ENCODE measurements at regions of chr7 and their contacts with region 1.

Region 1: GRCh38 chr7:33895025-33895804 is 10.1 kb upstream of the BMPER start:
- DNase-seq: peak; percentile 77
- H3K4me3 Mint-ChIP-seq: no peak overlapping the region
- H3K27ac Mint-ChIP-seq: no peak overlapping the region
- H3K4me1 Mint-ChIP-seq: peaks cover 14% of the 10 kb centered on the region
- H3K27me3 Mint-ChIP-seq: peaks cover 11% of the 10 kb centered on the region
- CTCF ChIP-seq: peak; percentile 79

Region 2: GRCh38 chr7:33243319-33243881 is 651.8 kb before region 1 on chr7:
- CTCF ChIA-PET with region 1: interaction called, 10 read pairs
- POLR2A ChIA-PET with region 1: no interaction called
- intact Hi-C with region 1: loop called (anchors 10 kb)
- DNase-seq: peak; percentile 57
- H3K4me3 Mint-ChIP-seq: no peak overlapping the region
- H3K27ac Mint-ChIP-seq: no peak overlapping the region
- H3K4me1 Mint-ChIP-seq: no peaks in the 10 kb centered on the region
- H3K27me3 Mint-ChIP-seq: no peaks in the 10 kb centered on the region
- CTCF ChIP-seq: peak; percentile 58

Region 3: DNA sequence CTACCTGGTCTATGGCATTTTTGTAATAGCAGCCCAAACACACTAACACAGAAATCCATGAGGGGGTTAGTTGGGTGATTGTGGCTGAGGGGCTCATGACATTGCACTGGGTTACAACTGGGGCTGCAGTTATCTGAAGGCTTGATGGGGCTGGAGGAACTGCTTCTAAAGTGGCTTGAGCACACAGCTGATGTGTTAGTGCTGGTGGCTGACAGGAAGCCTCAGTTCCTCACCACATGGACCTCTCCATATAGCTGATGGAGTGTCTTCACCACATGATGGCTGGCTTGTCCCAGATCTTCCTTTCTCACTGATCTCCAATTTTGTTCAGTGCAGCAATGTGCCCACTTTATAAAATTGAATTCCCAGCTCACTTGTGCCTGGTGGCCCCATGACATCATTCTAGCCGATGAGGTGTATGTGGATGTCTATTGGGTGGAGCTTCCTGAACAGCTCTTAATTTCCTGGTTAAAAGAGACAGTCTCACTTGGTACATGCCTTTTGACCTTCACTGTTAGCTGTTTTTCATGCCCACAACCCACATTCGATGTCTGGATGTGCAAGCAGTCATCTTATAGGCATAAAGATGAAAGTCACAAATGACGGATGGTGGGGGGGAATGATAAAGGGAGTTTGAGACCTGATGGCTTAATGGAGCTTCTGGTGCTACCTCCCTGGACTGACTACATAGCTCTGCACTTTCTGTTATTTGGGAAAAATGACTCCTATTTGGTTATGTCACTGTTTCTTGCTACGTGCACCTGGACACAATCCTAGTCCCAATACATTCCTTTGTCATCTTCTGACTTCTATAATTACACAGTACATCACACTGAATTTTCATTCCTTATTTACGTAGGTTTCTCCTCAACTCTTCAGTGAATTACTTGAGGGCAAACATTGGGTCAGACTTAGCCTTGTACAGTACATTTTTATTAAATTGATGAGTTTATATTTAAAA is 156.7 kb before region 1 on chr7:
- CTCF ChIA-PET with region 1: interaction called, 12 read pairs
- POLR2A ChIA-PET with region 1: no interaction called
- intact Hi-C with region 1: no loop called
- DNase-seq: no peak
- H3K4me3 Mint-ChIP-seq: no peak overlapping the region
- H3K27ac Mint-ChIP-seq: no peak overlapping the region
- H3K4me1 Mint-ChIP-seq: peaks cover 16% of the 10 kb centered on the region
- H3K27me3 Mint-ChIP-seq: no peaks in the 10 kb centered on the region
- CTCF ChIP-seq: no peak

Region 4: DNA sequence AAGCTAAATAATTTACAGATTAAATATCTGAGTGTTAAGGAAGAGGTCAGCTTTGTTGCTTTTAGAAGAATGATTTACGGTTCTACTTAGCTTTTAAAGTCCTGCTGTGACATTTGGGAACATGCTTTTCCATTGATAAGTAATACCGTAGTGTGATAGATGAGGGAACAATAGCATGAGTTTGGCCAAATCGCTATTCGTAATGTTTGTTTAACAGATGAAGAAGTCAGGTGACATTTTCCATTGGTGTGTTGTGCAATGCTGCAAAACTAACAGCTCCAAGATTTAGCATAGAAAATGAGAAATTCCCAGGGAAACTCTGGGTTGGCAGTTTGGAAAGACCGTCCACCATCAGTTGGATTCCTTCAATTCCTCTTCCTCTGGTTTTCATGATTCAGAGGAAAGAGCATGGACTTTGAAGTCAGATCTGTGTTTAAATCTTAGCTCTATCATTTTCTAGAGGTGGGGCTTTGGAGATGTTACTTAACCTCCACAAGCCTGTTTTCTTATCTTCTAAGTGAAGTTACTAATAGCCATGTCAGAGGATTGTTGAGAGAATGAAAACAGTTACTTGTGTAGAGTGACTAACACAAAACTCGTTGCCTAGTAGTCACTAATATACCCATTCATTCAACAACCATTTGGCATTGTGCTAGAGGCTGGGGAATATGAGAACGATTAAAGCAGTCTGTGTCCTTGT is 130.3 kb before region 1 on chr7:
- CTCF ChIA-PET with region 1: interaction called, 90 read pairs
- POLR2A ChIA-PET with region 1: no interaction called
- intact Hi-C with region 1: no loop called
- DNase-seq: no peak
- H3K4me3 Mint-ChIP-seq: no peak overlapping the region
- H3K27ac Mint-ChIP-seq: no peak overlapping the region
- H3K4me1 Mint-ChIP-seq: peaks cover 6% of the 10 kb centered on the region
- H3K27me3 Mint-ChIP-seq: no peaks in the 10 kb centered on the region
- CTCF ChIP-seq: no peak

Region 5: GRCh38 chr7:33876596-33877274 is 18.5 kb before region 1 on chr7:
- CTCF ChIA-PET with region 1: interaction called, 75 read pairs
- POLR2A ChIA-PET with region 1: no interaction called
- intact Hi-C with region 1: no loop called
- DNase-seq: no peak
- H3K4me3 Mint-ChIP-seq: no peak overlapping the region
- H3K27ac Mint-ChIP-seq: no peak overlapping the region
- H3K4me1 Mint-ChIP-seq: peaks cover 9% of the 10 kb centered on the region
- H3K27me3 Mint-ChIP-seq: no peaks in the 10 kb centered on the region
- CTCF ChIP-seq: no peak

Region 6: GRCh38 chr7:33952824-33953223 is 57.6 kb after region 1 on chr7:
- CTCF ChIA-PET with region 1: no interaction called
- POLR2A ChIA-PET with region 1: no interaction called
- intact Hi-C with region 1: no loop called
- DNase-seq: no peak
- H3K4me3 Mint-ChIP-seq: no peak overlapping the region
- H3K27ac Mint-ChIP-seq: no peak overlapping the region
- H3K4me1 Mint-ChIP-seq: no peaks in the 10 kb centered on the region
- H3K27me3 Mint-ChIP-seq: no peaks in the 10 kb centered on the region
- CTCF ChIP-seq: no peak

Region 7: GRCh38 chr7:33998476-33998875 is 103.3 kb after region 1 on chr7:
- CTCF ChIA-PET with region 1: no interaction called
- POLR2A ChIA-PET with region 1: no interaction called
- intact Hi-C with region 1: no loop called
- DNase-seq: no peak
- H3K4me3 Mint-ChIP-seq: no peak overlapping the region
- H3K27ac Mint-ChIP-seq: no peak overlapping the region
- H3K4me1 Mint-ChIP-seq: no peaks in the 10 kb centered on the region
- H3K27me3 Mint-ChIP-seq: no peaks in the 10 kb centered on the region
- CTCF ChIP-seq: no peak

Region 8: DNA sequence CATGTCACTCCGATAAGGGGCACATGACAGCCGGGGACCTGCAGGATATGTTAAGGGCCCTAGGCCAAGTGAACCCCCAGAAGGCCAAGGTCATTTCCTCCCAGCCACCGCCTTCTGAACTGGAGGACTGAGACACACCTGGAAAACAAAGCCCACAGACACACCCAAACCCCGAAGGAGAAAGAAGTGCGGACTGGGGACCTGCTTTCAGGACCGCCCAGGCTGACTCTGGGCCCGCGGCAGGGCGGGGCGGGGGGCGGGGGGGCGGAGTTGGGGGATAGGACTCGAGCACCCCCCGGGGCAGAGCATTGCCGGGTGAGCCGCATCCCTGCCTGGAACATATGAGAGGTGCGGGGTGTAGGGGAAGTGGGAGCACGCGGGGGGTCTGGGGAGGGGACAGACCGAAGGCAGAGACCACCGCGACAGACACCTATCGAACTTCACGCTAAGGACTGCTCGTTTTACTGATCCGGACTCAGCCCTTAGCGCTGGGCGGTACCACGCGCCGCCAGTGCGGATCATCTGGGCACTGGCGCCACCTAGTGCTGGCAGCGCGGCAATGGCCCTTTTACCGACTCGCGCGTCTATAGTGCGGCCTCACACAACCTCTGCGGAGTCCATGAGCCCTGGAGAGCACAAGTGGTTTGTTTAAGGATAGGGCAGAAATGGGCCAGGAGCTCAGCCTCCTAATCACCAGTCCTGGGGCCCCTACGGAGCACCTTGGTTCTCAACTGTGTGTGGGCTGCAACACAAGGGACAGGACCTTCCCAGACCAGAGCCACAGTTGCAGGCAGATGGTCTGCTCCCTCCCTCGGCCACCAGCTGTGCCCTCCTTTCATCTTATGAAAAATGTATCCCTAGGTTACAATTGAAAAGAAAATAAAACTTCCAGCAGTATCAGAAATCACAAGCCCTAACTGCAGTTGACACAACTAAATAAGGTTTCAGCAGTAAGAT is 1642.1 kb after region 1 on chr7:
- CTCF ChIA-PET with region 1: no interaction called
- POLR2A ChIA-PET with region 1: no interaction called
- intact Hi-C with region 1: no loop called
- DNase-seq: peak; percentile 71
- H3K4me3 Mint-ChIP-seq: peak overlapping the region; percentile 60
- H3K27ac Mint-ChIP-seq: no peak overlapping the region
- H3K4me1 Mint-ChIP-seq: no peaks in the 10 kb centered on the region
- H3K27me3 Mint-ChIP-seq: peaks cover 34% of the 10 kb centered on the region
- CTCF ChIP-seq: peak; percentile 87

Measured in MCF 10A (cell line).